Kidney (tissue), 22 donors: ENCODE measurements at regions of chr10 and their contacts with region 1.

Region 1: GRCh38 chr10:96229568-96230030 is 41.8 kb downstream of the BLNK start:
- DNase-seq: peak; percentile 84 to 89 (median 86)
- H3K4me3 ChIP-seq: no peak overlapping the region
- H3K27ac ChIP-seq: no peak overlapping the region
- H3K4me1 ChIP-seq: no peaks in the 10 kb centered on the region
- H3K27me3 ChIP-seq: no peaks in the 10 kb centered on the region
- CTCF ChIP-seq: peak; percentile 88

Region 2: DNA sequence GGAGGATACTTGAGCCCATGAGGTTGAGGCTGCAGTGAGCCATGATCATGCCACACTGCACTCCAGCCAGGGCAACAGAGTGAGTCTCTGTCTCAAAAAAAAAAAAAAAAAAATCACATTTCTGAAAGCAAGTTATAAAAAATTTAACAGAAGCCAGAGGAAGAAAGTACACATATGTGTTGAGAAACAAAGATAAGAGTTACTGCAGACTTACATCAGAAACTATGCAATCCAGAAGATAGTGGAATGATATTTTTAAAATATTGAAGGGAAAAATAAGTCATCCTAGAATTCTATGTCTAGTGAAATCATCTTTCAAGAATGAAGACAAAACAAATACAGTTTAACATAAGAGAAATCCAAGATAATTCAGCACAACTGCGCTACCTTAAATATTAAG is 52.6 kb before region 1 on chr10:
- intact Hi-C with region 1: no loop called
- DNase-seq: no peak
- H3K4me3 ChIP-seq: no peak overlapping the region
- H3K27ac ChIP-seq: no peak overlapping the region
- H3K4me1 ChIP-seq: no peaks in the 10 kb centered on the region
- H3K27me3 ChIP-seq: no peaks in the 10 kb centered on the region
- CTCF ChIP-seq: no peak

Region 3: DNA sequence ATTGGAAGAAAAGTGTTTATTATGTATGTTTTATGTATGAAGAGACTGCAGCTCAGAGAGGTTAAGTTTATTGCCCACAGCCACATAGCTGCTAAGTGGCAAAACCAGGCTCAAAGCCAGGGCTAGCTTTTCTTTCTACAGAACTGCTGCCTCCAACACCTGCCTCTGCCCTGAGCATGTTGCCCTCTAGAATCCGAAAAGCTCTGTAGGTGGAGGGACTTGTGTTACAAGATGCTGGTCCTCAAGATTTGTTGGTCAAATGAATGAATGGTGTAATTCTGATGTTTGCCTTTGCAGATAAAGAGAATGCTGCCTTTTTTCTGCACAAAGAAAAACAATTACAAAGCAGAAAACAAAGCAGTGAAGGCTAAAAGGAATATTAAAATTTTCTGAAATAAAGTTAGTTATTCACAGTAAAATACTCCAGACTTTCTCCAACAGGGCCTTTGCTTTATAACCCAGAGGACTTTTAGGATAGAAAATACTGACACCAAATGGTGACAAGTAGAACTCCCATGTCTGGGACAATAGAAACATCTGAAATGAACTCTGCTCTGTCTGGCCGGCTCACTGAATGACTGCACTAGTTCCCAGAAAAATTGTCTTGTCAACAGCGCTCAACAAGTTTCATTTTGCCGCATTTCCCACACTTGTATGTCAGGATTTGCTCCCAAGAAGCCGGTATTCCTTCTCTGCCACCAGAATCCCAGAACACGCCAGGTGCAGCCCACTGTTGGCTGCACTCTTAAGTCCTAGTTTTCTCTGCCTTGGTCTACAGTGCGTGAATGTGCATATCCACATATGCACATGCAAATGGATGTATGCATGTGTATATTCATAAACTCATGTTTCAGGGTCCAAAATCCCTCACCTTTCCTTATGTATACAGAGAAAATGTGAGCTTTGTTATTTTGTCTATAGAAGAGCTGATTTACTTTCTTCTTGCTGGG is 63.6 kb after region 1 on chr10:
- intact Hi-C with region 1: loop called (anchors 5 kb)
- DNase-seq: peak in 3 of 5 donors; percentile 53 to 80 (median 73)
- H3K4me3 ChIP-seq: no peak overlapping the region
- H3K27ac ChIP-seq: no peak overlapping the region
- H3K4me1 ChIP-seq: peaks cover 3 to 6% (median 6%) of the 10 kb centered on the region in 3 donors
- H3K27me3 ChIP-seq: no peaks in the 10 kb centered on the region
- CTCF ChIP-seq: peak; percentile 55